ENCODE measurements at regions of chr12 and their contacts with region 1.

Region 1: DNA sequence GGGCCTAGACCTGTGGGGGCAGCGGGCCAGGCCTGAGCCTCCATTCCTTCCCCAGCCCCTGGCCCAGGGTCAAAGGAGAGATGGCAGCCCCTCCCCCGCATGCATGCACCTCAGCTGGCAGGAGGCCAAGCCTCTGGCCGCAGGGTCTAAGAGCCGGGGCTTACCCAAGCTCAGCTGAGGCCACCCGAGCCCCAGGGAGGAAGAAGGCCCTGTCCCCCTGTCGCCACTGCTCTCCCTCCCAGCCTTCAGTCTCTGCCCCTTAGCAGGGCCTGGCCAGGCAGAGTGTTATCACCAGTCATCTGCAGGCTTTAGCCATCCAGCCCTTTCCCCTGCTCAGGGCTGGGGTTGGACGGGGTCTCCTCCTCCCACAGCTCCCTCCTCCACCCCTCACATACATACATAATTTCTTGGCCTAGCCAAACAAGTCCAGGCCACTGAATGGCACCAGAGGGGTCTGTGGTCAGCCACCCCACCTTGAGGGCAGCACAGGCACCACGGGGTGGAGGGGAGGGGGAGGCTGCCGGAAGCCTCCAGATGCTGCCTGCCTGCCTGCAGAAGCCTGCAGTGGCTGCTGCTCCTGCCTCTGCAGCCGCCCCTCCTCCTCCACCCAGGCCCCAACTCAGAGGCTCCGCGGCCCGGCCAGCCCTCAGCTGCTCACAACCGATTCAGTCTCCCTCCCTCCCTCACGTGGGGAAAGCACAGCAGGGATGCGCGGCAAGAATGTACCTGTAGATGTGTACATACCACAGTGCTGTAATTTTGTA is 22.8 kb downstream of the RAB35 start:
- DNase-seq: peak in 1 of 3 donors; percentile 46
- ATAC-seq: peak in 1 of 4 donors; percentile 2
- H3K4me3 ChIP-seq: no peak overlapping the region
- H3K27ac ChIP-seq: no peak overlapping the region
- H3K4me1 ChIP-seq: no peaks in the 10 kb centered on the region
- H3K27me3 ChIP-seq: no peaks in the 10 kb centered on the region
- CTCF ChIP-seq: no peak
- POLR2A ChIP-seq: no peak

Region 2: DNA sequence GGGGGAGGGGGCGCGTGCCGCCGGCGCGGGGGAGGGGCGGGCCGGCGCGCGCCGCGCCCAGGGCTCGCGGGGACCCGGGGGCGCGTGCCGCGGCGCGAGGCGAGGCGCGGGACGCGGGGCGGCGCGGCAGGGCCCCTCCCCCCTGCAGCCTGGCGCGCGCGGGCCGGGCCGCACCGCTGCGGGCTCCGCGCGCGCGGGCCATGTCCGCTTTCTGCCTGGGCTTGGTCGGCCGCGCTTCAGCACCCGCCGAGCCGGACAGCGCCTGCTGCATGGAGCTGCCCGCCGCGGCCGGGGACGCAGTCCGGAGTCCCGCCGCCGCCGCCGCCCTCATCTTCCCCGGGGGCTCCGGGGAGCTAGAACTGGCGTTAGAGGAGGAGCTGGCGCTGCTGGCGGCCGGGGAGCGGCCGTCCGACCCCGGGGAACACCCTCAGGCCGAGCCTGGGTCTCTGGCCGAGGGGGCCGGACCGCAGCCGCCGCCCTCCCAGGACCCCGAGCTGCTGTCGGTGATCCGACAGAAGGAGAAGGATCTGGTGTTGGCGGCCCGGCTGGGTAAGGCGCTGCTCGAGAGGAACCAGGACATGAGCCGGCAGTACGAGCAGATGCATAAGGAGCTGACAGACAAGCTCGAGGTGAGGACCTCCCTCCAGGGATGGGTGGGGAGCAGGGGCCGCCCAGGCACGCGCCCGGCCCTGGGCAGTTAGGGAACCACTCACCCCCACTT is 103.9 kb before region 1 on chr12:
- intact Hi-C with region 1: loop called in 1 of 2 experiments (anchors 10 kb)
- DNase-seq: peak; percentile 83 to 87 (median 85)
- ATAC-seq: peak; percentile 73 to 86 (median 81)
- H3K4me3 ChIP-seq: peak overlapping the region; percentile 60 to 67 (median 64)
- H3K27ac ChIP-seq: no peak overlapping the region
- H3K4me1 ChIP-seq: peaks cover 0 to 10% (median 3%) of the 10 kb centered on the region in 4 donors
- H3K27me3 ChIP-seq: peaks cover 0 to 7% of the 10 kb centered on the region in 2 donors
- CTCF ChIP-seq: no peak
- POLR2A ChIP-seq: no peak